ENCODE measurements at regions of chr2 and their contacts with region 1.

Region 1: DNA sequence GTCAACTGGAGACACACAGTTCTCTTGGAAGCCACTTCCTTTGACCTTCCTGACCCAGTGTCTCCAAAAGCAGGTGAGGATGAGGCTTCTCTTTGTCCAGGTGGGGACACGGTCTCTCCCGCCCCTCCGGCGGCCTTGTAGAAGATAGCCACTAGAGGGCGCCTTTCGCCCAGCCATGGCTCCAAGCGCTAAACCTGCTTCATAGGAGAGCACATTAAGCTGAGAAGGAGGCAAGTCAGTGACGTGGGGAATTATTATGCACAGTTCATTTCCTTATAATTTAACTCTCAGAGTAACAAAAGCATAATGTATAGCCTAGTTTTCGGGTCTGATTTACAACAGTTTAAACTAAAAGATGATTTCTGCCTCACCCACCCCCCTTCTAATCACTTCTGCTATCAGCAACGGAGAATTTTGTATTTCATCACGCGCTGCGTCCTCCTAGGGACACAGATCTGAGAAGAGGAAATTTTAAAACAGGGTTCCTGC is 208.7 kb downstream of the ICOS start:
- DNase-seq: peak; percentile 62 to 86 (median 72)
- ATAC-seq: peak; percentile 98
- H3K4me3 ChIP-seq: peak overlapping the region; percentile 47
- H3K4me3 Mint-ChIP-seq: peak overlapping the region; percentile 87
- H3K27ac ChIP-seq: no peak overlapping the region
- H3K27ac Mint-ChIP-seq: no peak overlapping the region
- H3K4me1 ChIP-seq: peaks cover 8% of the 10 kb centered on the region
- H3K4me1 Mint-ChIP-seq: peaks cover 5% of the 10 kb centered on the region
- H3K27me3 ChIP-seq: peaks cover 0 to 4% of the 10 kb centered on the region in 2 experiments
- H3K27me3 Mint-ChIP-seq: peaks cover 9% of the 10 kb centered on the region
- CTCF ChIP-seq: peak; percentile 97

Region 2: GRCh38 chr2:203928849-203929248 is 216.5 kb before region 1 on chr2:
- CTCF ChIA-PET with region 1: interaction called, 3 read pairs
- POLR2A ChIA-PET with region 1: no interaction called
- intact Hi-C with region 1: loop called (anchors 10 kb)
- DNase-seq: peak in 3 of 14 experiments; percentile 52 to 62 (median 59)
- ATAC-seq: peak; percentile 41
- H3K4me3 ChIP-seq: no peak overlapping the region
- H3K4me3 Mint-ChIP-seq: no peak overlapping the region
- H3K27ac ChIP-seq: no peak overlapping the region
- H3K27ac Mint-ChIP-seq: no peak overlapping the region
- H3K4me1 ChIP-seq: peaks cover 19% of the 10 kb centered on the region
- H3K4me1 Mint-ChIP-seq: peaks cover 39% of the 10 kb centered on the region
- H3K27me3 ChIP-seq: no peaks in the 10 kb centered on the region
- H3K27me3 Mint-ChIP-seq: no peaks in the 10 kb centered on the region
- CTCF ChIP-seq: peak; percentile 80

Region 3: GRCh38 chr2:204108330-204108751 is 37.0 kb before region 1 on chr2:
- CTCF ChIA-PET with region 1: no interaction called
- POLR2A ChIA-PET with region 1: interaction called, 5 read pairs
- intact Hi-C with region 1: loop called in 1 of 2 experiments (anchors 5 kb)
- DNase-seq: peak; percentile 14 to 81 (median 32)
- ATAC-seq: peak; percentile 71
- H3K4me3 ChIP-seq: peak overlapping the region; percentile 23
- H3K4me3 Mint-ChIP-seq: peak overlapping the region; percentile 32
- H3K27ac ChIP-seq: no peak overlapping the region
- H3K27ac Mint-ChIP-seq: peak overlapping the region; percentile 19
- H3K4me1 ChIP-seq: peaks cover 32% of the 10 kb centered on the region
- H3K4me1 Mint-ChIP-seq: peaks cover 54% of the 10 kb centered on the region
- H3K27me3 ChIP-seq: no peaks in the 10 kb centered on the region
- H3K27me3 Mint-ChIP-seq: no peaks in the 10 kb centered on the region
- CTCF ChIP-seq: peak; percentile 79

Region 4: GRCh38 chr2:204691911-204692510 is 546.7 kb after region 1 on chr2:
- CTCF ChIA-PET with region 1: no interaction called
- POLR2A ChIA-PET with region 1: no interaction called
- intact Hi-C with region 1: loop called in 1 of 2 experiments (anchors 1 kb)
- DNase-seq: peak in 7 of 14 experiments; percentile 1 to 48 (median 11)
- ATAC-seq: no peak
- H3K4me3 ChIP-seq: no peak overlapping the region
- H3K4me3 Mint-ChIP-seq: no peak overlapping the region
- H3K27ac ChIP-seq: no peak overlapping the region
- H3K27ac Mint-ChIP-seq: no peak overlapping the region
- H3K4me1 ChIP-seq: no peaks in the 10 kb centered on the region
- H3K4me1 Mint-ChIP-seq: peaks cover 14% of the 10 kb centered on the region
- H3K27me3 ChIP-seq: no peaks in the 10 kb centered on the region
- H3K27me3 Mint-ChIP-seq: no peaks in the 10 kb centered on the region
- CTCF ChIP-seq: peak; percentile 63

Region 5: GRCh38 chr2:205925373-205926337 is 1780.3 kb after region 1 on chr2:
- CTCF ChIA-PET with region 1: no interaction called
- POLR2A ChIA-PET with region 1: no interaction called
- intact Hi-C with region 1: loop called (anchors 5 to 10 kb)
- DNase-seq: peak; percentile 46 to 80 (median 59)
- ATAC-seq: peak; percentile 76
- H3K4me3 ChIP-seq: no peak overlapping the region
- H3K4me3 Mint-ChIP-seq: no peak overlapping the region
- H3K27ac ChIP-seq: no peak overlapping the region
- H3K27ac Mint-ChIP-seq: no peak overlapping the region
- H3K4me1 ChIP-seq: peaks cover 9% of the 10 kb centered on the region
- H3K4me1 Mint-ChIP-seq: peaks cover 10% of the 10 kb centered on the region
- H3K27me3 ChIP-seq: peaks cover 20 to 26% of the 10 kb centered on the region in 2 experiments
- H3K27me3 Mint-ChIP-seq: peaks cover 68% of the 10 kb centered on the region
- CTCF ChIP-seq: peak; percentile 74